Activated CD8-positive, alpha-beta memory T cell treated with anti-CD3 and anti-CD28 coated beads, Interleukin-2, amount 10 ng/mL, durations not matched to agents 7 days and 5 days (primary cell): ENCODE measurements at regions of chr6 and their contacts with region 1.

Region 1: GRCh38 chr6:127266178-127266891 is at the start of gene RNF146:
- DNase-seq: peak; percentile 80
- ATAC-seq: peak; percentile 84
- H3K4me3 Mint-ChIP-seq: peak within 1 kb of the TSS; percentile 100
- H3K27ac Mint-ChIP-seq: peak within 1 kb of the TSS; percentile 100
- H3K4me1 Mint-ChIP-seq: peaks cover 34% of the 10 kb centered on the region
- H3K27me3 Mint-ChIP-seq: peaks cover 4% of the 10 kb centered on the region
- total RNA-seq, gene RNF146: 18.2 to 24.9 TPM

Region 2: GRCh38 chr6:127186889-127187288 is 79.4 kb before region 1 on chr6:
- CTCF ChIA-PET with region 1: interaction called, 32 read pairs
- DNase-seq: peak; percentile 74
- ATAC-seq: peak; percentile 51
- H3K4me3 Mint-ChIP-seq: no peak overlapping the region
- H3K27ac Mint-ChIP-seq: no peak overlapping the region
- H3K4me1 Mint-ChIP-seq: no peaks in the 10 kb centered on the region
- H3K27me3 Mint-ChIP-seq: peaks cover 18% of the 10 kb centered on the region

Region 3: DNA sequence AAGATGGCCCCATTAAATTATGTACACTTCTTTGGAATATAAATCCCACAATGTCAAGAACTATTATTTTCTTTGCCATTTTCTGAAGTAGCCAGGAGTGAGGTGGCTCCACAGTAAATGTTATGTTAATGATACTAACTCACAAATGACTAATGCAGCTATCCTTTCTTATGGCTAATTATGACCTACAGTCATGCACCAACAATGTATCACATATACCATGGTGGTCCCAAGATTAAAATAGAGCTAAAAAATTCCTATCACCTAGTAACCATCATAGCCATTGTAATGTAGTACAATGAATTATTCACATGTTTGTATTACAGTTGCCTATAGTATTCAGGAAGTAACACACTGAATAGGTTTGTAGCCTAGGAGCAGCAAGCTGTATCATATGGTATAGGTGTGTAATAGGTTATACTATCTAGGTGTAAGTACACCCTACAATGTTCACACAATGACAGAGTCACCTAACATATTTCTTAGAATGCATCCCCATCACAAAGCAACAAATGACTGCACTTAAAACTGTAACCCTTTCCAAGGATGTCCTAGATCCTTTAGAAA is 61.8 kb after region 1 on chr6:
- CTCF ChIA-PET with region 1: no interaction called
- DNase-seq: no peak
- ATAC-seq: no peak
- H3K4me3 Mint-ChIP-seq: no peak overlapping the region
- H3K27ac Mint-ChIP-seq: no peak overlapping the region
- H3K4me1 Mint-ChIP-seq: peaks cover 6% of the 10 kb centered on the region
- H3K27me3 Mint-ChIP-seq: no peaks in the 10 kb centered on the region